Activated CD8-positive, alpha-beta T cell treated with anti-CD3 and anti-CD28 coated beads, Interleukin-2, amount 10 ng/mL, durations not matched to agents 7 days and 5 days (primary cell): ENCODE measurements at regions of chr1 and their contacts with region 1.

Region 1: DNA sequence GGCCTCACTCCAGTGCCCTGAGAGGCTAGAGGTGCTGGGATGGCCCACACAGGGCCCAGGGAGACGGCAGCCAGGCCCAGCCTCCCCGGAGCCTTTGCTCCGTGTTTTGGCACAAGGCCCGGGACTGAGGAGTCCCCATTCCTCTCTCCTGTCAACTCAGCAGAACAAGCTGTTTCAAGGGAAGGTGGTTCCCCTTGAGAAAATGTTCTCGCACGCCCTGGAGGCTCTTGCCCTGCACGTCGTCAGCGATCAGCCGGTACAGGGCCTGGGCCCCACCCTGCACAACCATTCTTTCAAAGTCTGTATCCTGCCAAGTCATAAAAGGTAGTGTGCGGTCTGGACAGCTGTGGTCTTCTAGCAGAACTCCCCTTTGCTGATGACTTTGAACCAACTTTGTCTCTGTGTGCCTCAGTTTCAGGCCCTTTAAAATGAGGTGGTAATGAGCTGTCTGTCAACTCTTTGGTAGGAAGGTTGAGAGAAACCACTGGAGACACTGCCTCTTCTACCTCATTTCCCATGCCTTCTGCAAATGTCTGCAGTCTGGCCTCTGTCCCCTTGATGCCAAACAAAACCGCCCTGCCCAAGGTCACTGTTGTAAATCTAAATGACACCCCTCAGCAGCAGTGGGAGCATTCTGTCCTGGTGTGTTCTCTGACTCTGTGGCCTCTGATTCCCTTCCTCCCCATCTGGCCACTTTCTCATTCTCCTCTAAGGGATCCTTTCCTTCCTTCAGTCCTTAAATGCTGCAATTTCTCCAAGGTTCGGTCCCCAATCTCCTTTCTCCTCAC is 138.6 kb upstream of the JUN start:
- DNase-seq: peak; percentile 87
- ATAC-seq: peak; percentile 99
- H3K4me3 Mint-ChIP-seq: peak overlapping the region; percentile 20
- H3K27ac Mint-ChIP-seq: peak overlapping the region; percentile 83
- H3K4me1 Mint-ChIP-seq: peaks cover 28% of the 10 kb centered on the region
- H3K27me3 Mint-ChIP-seq: no peaks in the 10 kb centered on the region

Region 2: GRCh38 chr1:58908561-58909560 is 13.6 kb before region 1 on chr1:
- CTCF ChIA-PET with region 1: interaction called, 10 read pairs
- POLR2A ChIA-PET with region 1: no interaction called
- DNase-seq: no peak
- ATAC-seq: no peak
- H3K4me3 Mint-ChIP-seq: no peak overlapping the region
- H3K27ac Mint-ChIP-seq: no peak overlapping the region
- H3K4me1 Mint-ChIP-seq: peaks cover 13% of the 10 kb centered on the region
- H3K27me3 Mint-ChIP-seq: peaks cover 7% of the 10 kb centered on the region

Region 3: DNA sequence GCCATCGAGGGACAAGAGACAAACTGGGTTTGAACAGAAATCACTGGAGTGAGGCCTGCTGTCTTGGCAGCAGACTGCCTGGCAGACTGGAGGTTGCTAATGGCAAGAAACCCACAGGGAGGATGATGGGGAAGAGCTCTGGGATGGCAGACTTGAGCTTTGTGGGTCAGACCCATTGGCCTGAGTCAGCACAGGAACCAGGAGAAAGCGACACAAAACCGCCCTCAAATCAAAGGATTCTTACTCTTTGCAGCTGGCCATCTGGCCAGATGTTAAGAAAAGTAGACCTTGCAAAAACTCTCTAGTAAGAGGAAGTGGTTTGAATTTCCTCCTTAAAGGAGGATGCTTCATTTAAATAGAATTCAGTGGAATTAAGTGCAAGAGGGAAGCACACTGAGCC is 56.6 kb after region 1 on chr1:
- CTCF ChIA-PET with region 1: no interaction called
- POLR2A ChIA-PET with region 1: no interaction called
- DNase-seq: no peak
- ATAC-seq: no peak
- H3K4me3 Mint-ChIP-seq: peak overlapping the region; percentile 10
- H3K27ac Mint-ChIP-seq: peak overlapping the region; percentile 77
- H3K4me1 Mint-ChIP-seq: peaks cover 31% of the 10 kb centered on the region
- H3K27me3 Mint-ChIP-seq: no peaks in the 10 kb centered on the region